ENCODE measurements at regions of chr1 and their contacts with region 1.

Region 1: DNA sequence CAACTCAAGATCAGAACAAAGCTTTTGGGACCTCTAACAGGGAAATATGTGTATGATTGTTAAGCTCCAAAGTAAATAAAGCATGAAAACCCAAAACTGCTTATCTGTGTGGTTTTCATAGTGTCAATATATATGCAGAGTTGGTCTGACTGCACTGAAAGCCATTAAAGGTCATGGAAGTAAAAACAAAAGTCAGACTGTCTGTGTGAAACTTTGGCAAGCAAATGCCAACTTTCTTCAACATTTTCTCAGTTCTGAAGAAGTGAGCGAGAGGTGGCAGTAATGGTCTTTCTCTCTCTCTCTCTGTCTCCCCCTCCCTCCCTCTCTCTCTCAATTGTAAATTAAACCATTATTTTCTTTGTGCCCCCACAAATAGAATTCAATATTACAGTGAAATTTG is 100.1 kb upstream of the S1PR1 start:
- DNase-seq: no peak
- CTCF ChIP-seq: peak; percentile 17

Region 2: GRCh38 chr1:101238681-101239094 is 101.9 kb after region 1 on chr1:
- in situ Hi-C with region 1: loop called (anchors 10 kb)
- DNase-seq: peak; percentile 74
- CTCF ChIP-seq: peak; percentile 78

Region 3: DNA sequence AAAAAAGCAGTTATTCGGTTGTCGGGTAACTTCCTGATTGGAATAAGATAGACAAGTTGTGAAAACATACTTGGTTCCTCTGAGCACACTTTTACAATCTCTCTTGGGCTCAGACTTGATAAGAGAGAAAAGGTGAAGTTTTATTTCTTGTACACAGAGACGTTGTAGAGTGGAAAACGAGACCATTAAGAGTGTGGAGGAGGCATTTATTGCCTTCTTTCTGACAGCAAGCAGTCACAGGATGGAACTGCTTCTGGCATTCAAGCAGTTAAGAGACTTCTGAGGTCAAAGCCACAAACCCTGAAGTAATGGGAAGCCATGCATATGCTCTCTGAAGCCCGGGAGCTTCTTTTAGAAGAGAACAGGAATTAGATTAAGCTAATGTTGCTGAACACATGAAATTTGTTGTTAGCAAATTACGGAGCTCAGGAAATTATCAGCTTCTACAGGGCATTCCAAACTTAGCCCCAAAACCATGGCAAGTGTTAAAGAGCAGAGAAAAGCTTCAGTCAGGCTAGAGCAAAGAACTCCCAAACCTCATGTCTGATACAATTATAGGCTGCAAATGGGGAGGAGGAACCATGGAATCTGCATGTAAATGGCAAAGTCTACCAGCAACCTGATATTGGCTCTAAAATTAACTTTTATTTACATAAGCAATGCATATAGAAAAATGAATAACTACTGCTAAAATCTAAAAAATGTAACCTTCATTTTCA is 126.0 kb after region 1 on chr1:
- in situ Hi-C with region 1: no loop called
- DNase-seq: no peak
- CTCF ChIP-seq: no peak

Region 4: DNA sequence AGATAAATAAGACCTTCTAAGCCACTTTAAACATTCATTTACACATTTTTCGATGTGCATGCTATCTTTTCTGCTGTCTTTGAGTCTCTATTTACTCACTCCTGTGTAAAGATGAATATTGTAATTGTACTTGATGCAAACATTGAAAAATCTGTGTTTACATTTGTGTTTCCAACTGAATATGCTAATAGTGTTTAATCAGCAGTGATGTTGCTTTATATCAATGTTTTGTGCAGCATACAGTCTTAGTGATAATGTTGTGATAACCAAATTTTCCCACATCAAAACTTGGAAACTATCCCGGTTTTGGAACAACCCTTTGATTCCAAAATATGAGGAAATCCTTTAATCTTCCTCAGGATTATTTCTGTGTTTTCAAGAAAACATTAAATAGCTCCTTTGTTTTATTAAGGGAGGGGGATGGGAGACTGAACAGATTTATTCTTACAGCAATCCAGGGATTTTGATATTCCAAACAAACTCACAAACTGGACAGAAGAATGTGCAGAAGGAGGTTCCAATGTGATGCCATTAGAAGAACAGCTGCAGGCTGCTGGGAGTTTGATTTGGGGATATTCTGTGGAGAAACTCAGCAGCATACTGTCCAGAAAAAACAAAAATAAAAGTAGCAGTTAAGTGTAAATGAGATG is 348.1 kb after region 1 on chr1:
- in situ Hi-C with region 1: no loop called
- DNase-seq: no peak
- CTCF ChIP-seq: no peak